CD4-positive, alpha-beta T cell (primary cell): ENCODE measurements at regions of chr4 and their contacts with region 1.

Region 1: GRCh38 chr4:148441986-148442831 is at the start of gene NR3C2:
- DNase-seq: peak; percentile 92 to 99 (median 97)
- ATAC-seq: peak; percentile 77
- H3K4me3 ChIP-seq: peak within 1 kb of the TSS; percentile 99
- H3K4me3 Mint-ChIP-seq: peak within 1 kb of the TSS; percentile 100
- H3K27ac ChIP-seq: peak within 1 kb of the TSS; percentile 89 to 92
- H3K27ac Mint-ChIP-seq: peak within 1 kb of the TSS; percentile 99
- H3K4me1 ChIP-seq: peaks cover 34% of the 10 kb centered on the region
- H3K4me1 Mint-ChIP-seq: peaks cover 69% of the 10 kb centered on the region
- H3K27me3 ChIP-seq: no peaks in the 10 kb centered on the region
- H3K27me3 Mint-ChIP-seq: peaks cover 8% of the 10 kb centered on the region
- CTCF ChIP-seq: no peak
- total RNA-seq, gene NR3C2: 31.6 to 35.0 TPM

Region 2: DNA sequence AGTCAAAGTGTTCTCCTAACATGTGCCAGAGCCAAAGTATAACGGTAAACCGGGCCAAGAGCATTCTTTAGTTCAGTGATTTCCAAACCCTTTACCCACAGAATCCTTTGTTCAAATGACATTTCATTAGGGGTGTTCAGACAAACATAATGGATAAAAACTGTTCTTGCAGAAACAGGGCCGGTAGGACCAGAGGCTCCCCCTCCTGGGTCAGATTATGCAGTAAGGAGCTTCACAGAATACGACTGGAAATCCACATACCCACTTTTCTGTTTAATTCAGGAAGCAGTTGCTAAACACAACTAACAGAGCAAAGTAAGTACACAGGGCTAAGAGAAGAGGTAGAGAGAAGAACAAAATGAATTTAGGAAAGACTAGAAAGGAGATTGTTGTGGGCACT is 871.6 kb before region 1 on chr4:
- CTCF ChIA-PET with region 1: no interaction called
- POLR2A ChIA-PET with region 1: no interaction called
- intact Hi-C with region 1: no loop called
- DNase-seq: no peak
- ATAC-seq: no peak
- H3K4me3 ChIP-seq: no peak overlapping the region
- H3K4me3 Mint-ChIP-seq: no peak overlapping the region
- H3K27ac ChIP-seq: no peak overlapping the region
- H3K27ac Mint-ChIP-seq: no peak overlapping the region
- H3K4me1 ChIP-seq: no peaks in the 10 kb centered on the region
- H3K4me1 Mint-ChIP-seq: no peaks in the 10 kb centered on the region
- H3K27me3 ChIP-seq: peaks cover 0 to 4% of the 10 kb centered on the region in 2 experiments
- H3K27me3 Mint-ChIP-seq: peaks cover 20% of the 10 kb centered on the region
- CTCF ChIP-seq: no peak

Region 3: GRCh38 chr4:147617173-147617840 is 824.9 kb before region 1 on chr4 and contains the start of gene TMEM184C:
- CTCF ChIA-PET with region 1: no interaction called
- POLR2A ChIA-PET with region 1: interaction called, 23 read pairs
- intact Hi-C with region 1: loop called (anchors 5 kb)
- DNase-seq: peak; percentile 96 to 99 (median 98)
- ATAC-seq: peak; percentile 95
- H3K4me3 ChIP-seq: peak within 1 kb of the TSS; percentile 78
- H3K4me3 Mint-ChIP-seq: peak within 1 kb of the TSS; percentile 89
- H3K27ac ChIP-seq: peak within 1 kb of the TSS; percentile 80 to 90
- H3K27ac Mint-ChIP-seq: peak within 1 kb of the TSS; percentile 92
- H3K4me1 ChIP-seq: peaks cover 29% of the 10 kb centered on the region
- H3K4me1 Mint-ChIP-seq: peaks cover 38% of the 10 kb centered on the region
- H3K27me3 ChIP-seq: no peaks in the 10 kb centered on the region
- H3K27me3 Mint-ChIP-seq: no peaks in the 10 kb centered on the region
- CTCF ChIP-seq: no peak
- total RNA-seq, gene TMEM184C: 10.0 to 10.1 TPM

Region 4: GRCh38 chr4:147731580-147732517 is 710.4 kb before region 1 on chr4 and contains the start of gene ARHGAP10:
- CTCF ChIA-PET with region 1: no interaction called
- POLR2A ChIA-PET with region 1: interaction called, 13 read pairs
- intact Hi-C with region 1: loop called in 1 of 2 experiments (anchors 5 kb)
- DNase-seq: peak; percentile 36 to 84 (median 62)
- ATAC-seq: peak; percentile 63
- H3K4me3 ChIP-seq: peak within 1 kb of the TSS; percentile 83
- H3K4me3 Mint-ChIP-seq: peak within 1 kb of the TSS; percentile 98
- H3K27ac ChIP-seq: peak within 1 kb of the TSS in 1 of 2 donors; percentile 65
- H3K27ac Mint-ChIP-seq: peak within 1 kb of the TSS; percentile 88
- H3K4me1 ChIP-seq: peaks cover 28% of the 10 kb centered on the region
- H3K4me1 Mint-ChIP-seq: peaks cover 37% of the 10 kb centered on the region
- H3K27me3 ChIP-seq: no peaks in the 10 kb centered on the region
- H3K27me3 Mint-ChIP-seq: no peaks in the 10 kb centered on the region
- CTCF ChIP-seq: no peak
- total RNA-seq, gene ARHGAP10: 5.6 to 5.7 TPM

Region 5: GRCh38 chr4:148056869-148057268 is 385.3 kb before region 1 on chr4:
- CTCF ChIA-PET with region 1: no interaction called
- POLR2A ChIA-PET with region 1: interaction called, 92 read pairs
- intact Hi-C with region 1: loop called (anchors 1 to 5 kb)
- DNase-seq: peak; percentile 14 to 82 (median 33)
- ATAC-seq: peak; percentile 24
- H3K4me3 ChIP-seq: no peak overlapping the region
- H3K4me3 Mint-ChIP-seq: peak overlapping the region; percentile 5
- H3K27ac ChIP-seq: peak overlapping the region in 1 of 2 donors; percentile 8
- H3K27ac Mint-ChIP-seq: peak overlapping the region; percentile 91
- H3K4me1 ChIP-seq: peaks cover 80% of the 10 kb centered on the region
- H3K4me1 Mint-ChIP-seq: peaks cover 94% of the 10 kb centered on the region
- H3K27me3 ChIP-seq: no peaks in the 10 kb centered on the region
- H3K27me3 Mint-ChIP-seq: no peaks in the 10 kb centered on the region
- CTCF ChIP-seq: peak; percentile 21

Region 6: GRCh38 chr4:148344352-148344751 is 97.9 kb before region 1 on chr4:
- CTCF ChIA-PET with region 1: no interaction called
- POLR2A ChIA-PET with region 1: interaction called, 11 read pairs
- intact Hi-C with region 1: no loop called
- DNase-seq: no peak
- ATAC-seq: no peak
- H3K4me3 ChIP-seq: no peak overlapping the region
- H3K4me3 Mint-ChIP-seq: no peak overlapping the region
- H3K27ac ChIP-seq: no peak overlapping the region
- H3K27ac Mint-ChIP-seq: no peak overlapping the region
- H3K4me1 ChIP-seq: no peaks in the 10 kb centered on the region
- H3K4me1 Mint-ChIP-seq: peaks cover 40% of the 10 kb centered on the region
- H3K27me3 ChIP-seq: no peaks in the 10 kb centered on the region
- H3K27me3 Mint-ChIP-seq: no peaks in the 10 kb centered on the region
- CTCF ChIP-seq: no peak

Region 7: GRCh38 chr4:148391056-148391455 is 51.2 kb before region 1 on chr4:
- CTCF ChIA-PET with region 1: no interaction called
- POLR2A ChIA-PET with region 1: interaction called, 11 read pairs
- intact Hi-C with region 1: no loop called
- DNase-seq: no peak
- ATAC-seq: no peak
- H3K4me3 ChIP-seq: no peak overlapping the region
- H3K4me3 Mint-ChIP-seq: no peak overlapping the region
- H3K27ac ChIP-seq: no peak overlapping the region
- H3K27ac Mint-ChIP-seq: no peak overlapping the region
- H3K4me1 ChIP-seq: no peaks in the 10 kb centered on the region
- H3K4me1 Mint-ChIP-seq: peaks cover 55% of the 10 kb centered on the region
- H3K27me3 ChIP-seq: no peaks in the 10 kb centered on the region
- H3K27me3 Mint-ChIP-seq: no peaks in the 10 kb centered on the region
- CTCF ChIP-seq: no peak

Region 8: DNA sequence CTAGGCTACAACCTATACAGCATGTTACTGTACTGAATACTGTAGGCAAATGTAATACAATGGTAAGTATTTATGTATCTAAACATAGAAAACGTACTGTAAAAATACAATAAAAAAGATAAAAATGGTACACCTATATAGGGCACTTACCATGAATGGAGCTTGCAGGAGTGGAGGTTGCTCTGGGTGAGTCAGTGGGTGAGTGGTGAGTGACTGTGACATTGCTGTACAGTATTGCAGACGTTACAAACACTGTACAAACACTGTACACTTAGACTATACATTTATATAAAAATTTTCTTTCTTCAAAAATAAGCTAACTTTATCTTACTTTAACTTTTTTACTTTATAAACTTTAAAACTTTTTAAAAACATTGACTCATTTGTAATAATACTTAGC is 190.3 kb after region 1 on chr4:
- CTCF ChIA-PET with region 1: no interaction called
- POLR2A ChIA-PET with region 1: no interaction called
- intact Hi-C with region 1: no loop called
- DNase-seq: no peak
- ATAC-seq: no peak
- H3K4me3 ChIP-seq: no peak overlapping the region
- H3K4me3 Mint-ChIP-seq: no peak overlapping the region
- H3K27ac ChIP-seq: no peak overlapping the region
- H3K27ac Mint-ChIP-seq: no peak overlapping the region
- H3K4me1 ChIP-seq: no peaks in the 10 kb centered on the region
- H3K4me1 Mint-ChIP-seq: no peaks in the 10 kb centered on the region
- H3K27me3 ChIP-seq: no peaks in the 10 kb centered on the region
- H3K27me3 Mint-ChIP-seq: no peaks in the 10 kb centered on the region
- CTCF ChIP-seq: no peak